ENCODE measurements at regions of chr7 and their contacts with region 1.

Region 1: GRCh38 chr7:90346336-90347125 is at the start of gene GTPBP10:
- DNase-seq: peak; percentile 84 to 91
- H3K4me3 ChIP-seq: peak within 1 kb of the TSS; percentile 94
- H3K27ac ChIP-seq: peak within 1 kb of the TSS; percentile 65
- H3K4me1 ChIP-seq: 0 out of 2 replicates have a peak, but pooled peaks cover 13% of the 10 kb centered on the region
- H3K27me3 ChIP-seq: no peaks in the 10 kb centered on the region
- CTCF ChIP-seq: peak; percentile 78
- total RNA-seq, gene GTPBP10: 29.3 and 36.7 TPM in 2 replicates

Region 2: DNA sequence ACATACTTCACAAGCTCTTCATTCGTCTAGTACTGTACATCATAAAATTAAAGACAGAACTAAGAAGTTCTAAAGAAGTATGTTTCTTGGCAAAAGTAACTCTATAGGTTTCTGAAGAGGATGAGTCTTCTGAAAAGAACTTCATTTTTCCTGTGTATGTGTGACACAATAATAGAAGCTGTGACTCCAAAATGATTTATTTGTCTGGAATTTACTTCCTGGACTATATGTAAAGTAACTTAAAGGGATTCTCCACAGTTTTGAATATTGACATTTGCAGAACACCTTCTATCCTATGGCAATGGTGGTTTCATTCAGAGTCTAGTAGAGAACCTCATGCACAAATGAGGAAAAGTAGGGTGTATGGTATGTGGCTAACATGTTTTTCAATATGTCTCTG is 36.9 kb after region 1 on chr7:
- CTCF ChIA-PET with region 1: no interaction called
- POLR2A ChIA-PET with region 1: no interaction called
- intact Hi-C with region 1: loop called (anchors 5 kb)
- DNase-seq: peak in 1 of 2 experiments; percentile 73
- H3K4me3 ChIP-seq: no peak overlapping the region
- H3K27ac ChIP-seq: 0 out of 2 replicates have a peak overlapping the region, but pooled peaks have one; percentile 3
- H3K4me1 ChIP-seq: peaks cover 15% of the 10 kb centered on the region
- H3K27me3 ChIP-seq: no peaks in the 10 kb centered on the region
- CTCF ChIP-seq: no peak

Region 3: GRCh38 chr7:90403174-90404113 is 56.9 kb after region 1 on chr7 and contains the start of gene CLDN12:
- CTCF ChIA-PET with region 1: no interaction called
- POLR2A ChIA-PET with region 1: interaction called, 9 read pairs
- intact Hi-C with region 1: loop called (anchors 1 kb)
- DNase-seq: peak; percentile 83 to 87
- H3K4me3 ChIP-seq: peak within 1 kb of the TSS; percentile 97
- H3K27ac ChIP-seq: peak within 1 kb of the TSS; percentile 73
- H3K4me1 ChIP-seq: peaks cover 13% of the 10 kb centered on the region
- H3K27me3 ChIP-seq: no peaks in the 10 kb centered on the region
- CTCF ChIP-seq: no peak
- total RNA-seq, gene CLDN12: 50.9 and 57.7 TPM in 2 replicates